Common myeloid progenitor, CD34-positive (primary cell): ENCODE measurements at regions of chr1 and their contacts with region 1.

Region 1: GRCh38 chr1:31762726-31763670 is 1.1 kb downstream of the ADGRB2 start:
- DNase-seq: peak; percentile 65 to 77 (median 74)
- H3K4me3 ChIP-seq: peak overlapping the region in 5 of 7 experiments; percentile 40 to 63 (median 43)
- H3K27ac ChIP-seq: no peak overlapping the region
- H3K4me1 ChIP-seq: peaks cover 0 to 45% (median 31%) of the 10 kb centered on the region in 4 experiments
- H3K27me3 ChIP-seq: peaks cover 0 to 38% (median 19%) of the 10 kb centered on the region in 5 experiments

Region 2: GRCh38 chr1:31593770-31594632 is 169.0 kb before region 1 on chr1:
- CTCF ChIA-PET with region 1: no interaction called
- POLR2A ChIA-PET with region 1: no interaction called
- DNase-seq: peak; percentile 75 to 86 (median 83)
- H3K4me3 ChIP-seq: no peak overlapping the region
- H3K27ac ChIP-seq: no peak overlapping the region
- H3K4me1 ChIP-seq: peaks cover 18 to 45% (median 22%) of the 10 kb centered on the region in 4 experiments
- H3K27me3 ChIP-seq: peaks cover 0 to 6% (median 4%) of the 10 kb centered on the region in 5 experiments

Region 3: GRCh38 chr1:31750858-31751510 is 12.0 kb before region 1 on chr1:
- CTCF ChIA-PET with region 1: interaction called, 34 read pairs
- POLR2A ChIA-PET with region 1: interaction called, 5 read pairs
- DNase-seq: peak in 2 of 3 donors; percentile 61 to 70
- H3K4me3 ChIP-seq: no peak overlapping the region
- H3K27ac ChIP-seq: no peak overlapping the region
- H3K4me1 ChIP-seq: peaks cover 0 to 51% (median 33%) of the 10 kb centered on the region in 4 experiments
- H3K27me3 ChIP-seq: no peaks in the 10 kb centered on the region